CD4-positive, alpha-beta memory T cell (primary cell): ENCODE measurements at regions of chr6 and their contacts with region 1.

Region 1: DNA sequence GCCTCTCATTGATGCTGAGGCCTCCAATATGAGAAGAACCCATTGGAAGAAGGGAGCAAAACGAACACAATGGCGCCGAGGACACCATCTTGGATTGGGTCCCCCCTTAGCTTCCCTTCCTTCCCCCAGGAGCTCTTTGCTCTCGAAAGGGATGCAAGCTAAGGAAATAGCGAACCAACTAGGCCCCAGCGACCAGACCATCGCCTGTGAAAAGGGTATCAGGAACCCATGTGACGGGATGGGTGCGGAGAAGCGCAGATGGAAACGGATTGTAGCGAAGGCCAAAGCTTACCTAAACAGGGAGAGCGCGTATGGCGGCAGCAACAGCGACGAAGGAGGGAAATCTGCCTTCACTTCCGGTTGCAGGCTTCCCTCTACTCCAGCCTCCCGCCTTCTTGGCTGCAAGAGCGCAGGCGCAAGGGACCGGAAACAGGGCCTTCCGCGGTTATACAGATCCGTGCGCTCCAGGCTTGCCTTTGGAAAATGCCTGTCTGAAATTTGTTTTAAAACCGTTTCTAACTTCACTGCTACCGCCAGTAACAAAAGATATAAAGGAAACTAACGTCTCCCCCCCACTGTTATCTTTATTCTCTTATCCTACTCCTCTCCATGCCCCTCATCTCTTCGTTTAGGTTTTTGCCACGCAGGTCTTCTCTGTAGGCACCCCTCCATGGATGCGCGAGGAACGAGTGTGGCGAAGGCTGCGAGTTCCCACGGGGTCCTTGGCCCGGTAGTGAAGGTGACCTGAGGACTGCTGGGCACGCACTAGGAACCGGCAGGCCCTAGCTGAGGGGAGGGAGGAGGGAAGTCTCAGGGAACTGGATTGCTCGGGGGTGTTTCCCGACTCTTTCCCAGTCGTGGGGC is at the start of gene DDX39B:
- DNase-seq: peak; percentile 95 to 97 (median 96)
- H3K4me3 ChIP-seq: peak within 1 kb of the TSS; percentile 96 to 97
- H3K4me3 Mint-ChIP-seq: peak within 1 kb of the TSS; percentile 96 to 99 (median 98)
- H3K27ac ChIP-seq: peak within 1 kb of the TSS; percentile 94
- H3K27ac Mint-ChIP-seq: peak within 1 kb of the TSS; percentile 94 to 100 (median 99)
- H3K4me1 ChIP-seq: peaks cover 48% of the 10 kb centered on the region
- H3K4me1 Mint-ChIP-seq: peaks cover 38 to 63% (median 51%) of the 10 kb centered on the region in 4 donors
- H3K27me3 ChIP-seq: no peaks in the 10 kb centered on the region
- H3K27me3 Mint-ChIP-seq: no peaks in the 10 kb centered on the region
- total RNA-seq, gene DDX39B: 729 to 737 TPM

Region 2: DNA sequence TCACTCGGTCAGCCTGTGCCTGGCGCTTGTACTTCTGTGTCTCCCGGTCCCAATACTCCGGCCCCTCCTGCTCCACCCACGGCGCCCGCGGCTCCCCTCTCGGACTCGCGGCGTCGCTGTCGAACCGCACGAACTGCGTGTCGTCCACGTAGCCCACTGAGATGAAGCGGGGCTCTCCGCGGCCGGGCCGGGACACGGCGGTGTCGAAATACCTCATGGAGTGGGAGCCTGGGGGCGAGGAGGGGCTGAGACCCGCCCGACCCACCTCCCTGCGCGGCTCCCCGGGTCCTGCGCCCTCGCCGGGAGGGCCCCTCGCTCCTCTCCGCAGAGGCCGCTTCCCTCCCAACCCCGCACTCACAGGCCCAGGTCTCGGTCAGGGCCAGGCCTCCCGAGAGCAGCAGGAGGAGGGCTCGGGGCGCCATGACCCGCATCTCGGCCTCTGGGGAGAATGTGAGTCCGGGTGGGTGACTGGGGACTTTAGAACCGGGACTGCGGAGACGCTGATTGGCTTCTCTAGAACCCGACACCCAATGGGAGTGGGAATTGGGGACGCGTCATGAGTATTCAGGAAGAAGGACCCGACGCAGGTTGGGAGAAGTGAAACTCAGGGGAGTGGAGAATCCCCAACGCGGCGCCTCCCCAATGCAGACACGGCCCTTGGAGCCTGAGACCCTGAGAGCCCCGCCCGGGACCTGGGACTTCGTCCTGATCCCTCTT is 270.1 kb before region 1 on chr6 and contains the start of gene HLA-C:
- CTCF ChIA-PET with region 1: no interaction called
- POLR2A ChIA-PET with region 1: interaction called, 3 read pairs
- intact Hi-C with region 1: loop called (anchors 5 kb)
- DNase-seq: peak; percentile 92 to 98 (median 93)
- H3K4me3 ChIP-seq: peak within 1 kb of the TSS; percentile 88 to 94
- H3K4me3 Mint-ChIP-seq: peak within 1 kb of the TSS; percentile 95 to 100 (median 98)
- H3K27ac ChIP-seq: peak within 1 kb of the TSS; percentile 100
- H3K27ac Mint-ChIP-seq: peak within 1 kb of the TSS; percentile 99 to 100 (median 100)
- H3K4me1 ChIP-seq: peaks cover 51% of the 10 kb centered on the region
- H3K4me1 Mint-ChIP-seq: peaks cover 45 to 77% (median 54%) of the 10 kb centered on the region in 4 donors
- H3K27me3 ChIP-seq: no peaks in the 10 kb centered on the region
- H3K27me3 Mint-ChIP-seq: peaks cover 0 to 2% of the 10 kb centered on the region in 2 donors
- total RNA-seq, gene HLA-C: 1,481 to 1,487 TPM

Region 3: DNA sequence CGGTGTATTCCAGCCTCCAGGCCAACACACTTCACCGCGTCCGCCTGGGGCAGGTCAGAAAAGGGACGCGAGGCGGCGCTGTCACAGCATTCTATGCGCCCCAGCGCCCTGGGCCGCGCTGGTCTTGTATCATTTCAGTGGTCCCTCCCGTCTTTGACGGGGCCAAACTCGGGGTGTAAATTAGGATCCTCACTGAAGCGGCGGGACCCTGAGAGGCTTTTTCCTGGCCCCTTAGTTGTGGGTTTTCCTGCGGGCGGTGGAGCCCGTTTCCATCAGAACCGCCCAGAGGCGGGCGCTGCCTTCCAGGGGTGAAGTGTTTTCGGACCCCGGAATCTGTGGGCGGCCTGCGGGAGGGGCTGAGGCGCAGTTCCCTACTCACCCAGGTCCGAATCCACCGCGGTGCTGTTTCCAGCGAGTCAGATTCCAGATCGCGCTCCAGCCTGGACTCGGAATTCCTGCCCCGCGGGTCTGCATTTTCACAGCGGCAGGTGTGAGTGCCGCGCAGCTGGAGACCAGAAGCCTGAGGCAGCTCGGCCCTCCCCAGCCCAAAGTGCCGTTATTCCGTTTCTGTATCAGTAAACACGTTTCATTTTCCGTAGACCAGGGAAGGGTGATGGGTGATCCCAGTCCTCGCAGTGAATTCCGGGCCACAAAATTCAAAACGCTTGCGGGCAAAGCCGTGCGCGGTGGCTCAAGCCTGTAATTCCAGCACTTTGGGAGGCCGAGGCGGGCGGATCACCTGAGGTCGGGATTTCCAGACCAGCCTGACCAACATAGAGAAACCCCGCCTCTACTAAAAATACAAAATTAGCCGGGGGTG is 47.8 kb before region 1 on chr6:
- CTCF ChIA-PET with region 1: interaction called, 49 read pairs
- POLR2A ChIA-PET with region 1: interaction called, 152 read pairs
- intact Hi-C with region 1: loop called (anchors 1 kb)
- DNase-seq: peak; percentile 56 to 76 (median 73)
- H3K4me3 ChIP-seq: peak overlapping the region; percentile 71 to 91
- H3K4me3 Mint-ChIP-seq: peak overlapping the region; percentile 85 to 98 (median 91)
- H3K27ac ChIP-seq: peak overlapping the region; percentile 77
- H3K27ac Mint-ChIP-seq: peak overlapping the region; percentile 87 to 96 (median 95)
- H3K4me1 ChIP-seq: peaks cover 63% of the 10 kb centered on the region
- H3K4me1 Mint-ChIP-seq: peaks cover 35 to 69% (median 50%) of the 10 kb centered on the region in 4 donors
- H3K27me3 ChIP-seq: no peaks in the 10 kb centered on the region
- H3K27me3 Mint-ChIP-seq: no peaks in the 10 kb centered on the region

Region 4: DNA sequence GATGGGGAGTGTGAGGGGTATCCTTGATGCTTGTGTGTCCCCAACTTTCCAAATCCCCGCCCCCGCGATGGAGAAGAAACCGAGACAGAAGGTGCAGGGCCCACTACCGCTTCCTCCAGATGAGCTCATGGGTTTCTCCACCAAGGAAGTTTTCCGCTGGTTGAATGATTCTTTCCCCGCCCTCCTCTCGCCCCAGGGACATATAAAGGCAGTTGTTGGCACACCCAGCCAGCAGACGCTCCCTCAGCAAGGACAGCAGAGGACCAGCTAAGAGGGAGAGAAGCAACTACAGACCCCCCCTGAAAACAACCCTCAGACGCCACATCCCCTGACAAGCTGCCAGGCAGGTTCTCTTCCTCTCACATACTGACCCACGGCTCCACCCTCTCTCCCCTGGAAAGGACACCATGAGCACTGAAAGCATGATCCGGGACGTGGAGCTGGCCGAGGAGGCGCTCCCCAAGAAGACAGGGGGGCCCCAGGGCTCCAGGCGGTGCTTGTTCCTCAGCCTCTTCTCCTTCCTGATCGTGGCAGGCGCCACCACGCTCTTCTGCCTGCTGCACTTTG is 33.5 kb after region 1 on chr6 and contains the start of gene TNF:
- CTCF ChIA-PET with region 1: interaction called, 595 read pairs
- POLR2A ChIA-PET with region 1: interaction called, 3,597 read pairs
- intact Hi-C with region 1: loop called (anchors 1 kb)
- DNase-seq: peak; percentile 71 to 92 (median 74)
- H3K4me3 ChIP-seq: peak within 1 kb of the TSS; percentile 87 to 99
- H3K4me3 Mint-ChIP-seq: peak within 1 kb of the TSS; percentile 88 to 100 (median 98)
- H3K27ac ChIP-seq: peak within 1 kb of the TSS; percentile 83
- H3K27ac Mint-ChIP-seq: peak within 1 kb of the TSS; percentile 96 to 100 (median 99)
- H3K4me1 ChIP-seq: peaks cover 82% of the 10 kb centered on the region
- H3K4me1 Mint-ChIP-seq: peaks cover 58 to 97% (median 73%) of the 10 kb centered on the region in 4 donors
- H3K27me3 ChIP-seq: no peaks in the 10 kb centered on the region
- H3K27me3 Mint-ChIP-seq: no peaks in the 10 kb centered on the region
- total RNA-seq, gene TNF: 25.0 to 28.2 TPM

Region 5: DNA sequence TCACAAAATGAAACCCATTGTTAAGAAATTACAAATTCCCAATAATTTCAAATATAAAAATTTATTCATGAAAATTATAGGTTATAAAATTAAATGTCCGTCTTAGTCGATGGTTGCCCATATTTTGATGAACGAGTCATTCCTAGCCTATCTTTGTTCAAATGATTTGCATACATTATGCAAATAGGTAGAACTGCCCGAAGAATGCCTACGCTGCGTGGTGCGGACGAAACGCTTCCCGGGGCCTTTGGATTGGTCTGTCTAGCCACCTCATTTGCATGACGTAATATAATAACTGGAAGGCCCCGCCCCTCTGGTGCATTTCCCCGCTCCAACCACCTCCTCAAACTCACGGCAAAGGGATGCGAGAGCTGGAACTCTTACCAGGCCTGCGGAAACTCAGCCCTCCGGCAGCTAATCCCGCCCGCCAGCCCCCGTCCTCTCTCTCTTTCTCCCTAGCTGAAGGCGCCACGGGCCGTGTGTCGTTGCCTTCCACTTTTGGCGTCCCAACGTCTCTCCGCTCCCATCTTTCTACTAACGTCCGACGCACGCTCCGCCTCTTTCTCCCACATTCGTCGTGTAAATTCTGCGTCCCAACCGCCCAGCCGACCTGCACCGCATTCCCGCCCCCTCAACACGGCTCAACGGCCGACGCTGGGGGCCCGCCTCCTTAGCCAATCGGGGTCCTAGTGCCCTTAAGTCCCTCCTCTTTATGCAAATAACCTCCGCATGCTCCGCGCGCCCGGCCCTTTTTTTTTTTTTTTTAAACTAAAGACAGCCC is 78.1 kb after region 1 on chr6:
- CTCF ChIA-PET with region 1: interaction called, 3 read pairs
- POLR2A ChIA-PET with region 1: interaction called, 20 read pairs
- intact Hi-C with region 1: loop called (anchors 1 kb)
- DNase-seq: peak; percentile 96 to 98 (median 98)
- H3K4me3 ChIP-seq: peak overlapping the region in 1 of 2 donors; percentile 93
- H3K4me3 Mint-ChIP-seq: peak overlapping the region; percentile 89 to 98 (median 93)
- H3K27ac ChIP-seq: peak overlapping the region; percentile 99
- H3K27ac Mint-ChIP-seq: peak overlapping the region; percentile 91 to 99 (median 98)
- H3K4me1 ChIP-seq: peaks cover 34% of the 10 kb centered on the region
- H3K4me1 Mint-ChIP-seq: peaks cover 21 to 49% (median 39%) of the 10 kb centered on the region in 4 donors
- H3K27me3 ChIP-seq: no peaks in the 10 kb centered on the region
- H3K27me3 Mint-ChIP-seq: no peaks in the 10 kb centered on the region

Region 6: DNA sequence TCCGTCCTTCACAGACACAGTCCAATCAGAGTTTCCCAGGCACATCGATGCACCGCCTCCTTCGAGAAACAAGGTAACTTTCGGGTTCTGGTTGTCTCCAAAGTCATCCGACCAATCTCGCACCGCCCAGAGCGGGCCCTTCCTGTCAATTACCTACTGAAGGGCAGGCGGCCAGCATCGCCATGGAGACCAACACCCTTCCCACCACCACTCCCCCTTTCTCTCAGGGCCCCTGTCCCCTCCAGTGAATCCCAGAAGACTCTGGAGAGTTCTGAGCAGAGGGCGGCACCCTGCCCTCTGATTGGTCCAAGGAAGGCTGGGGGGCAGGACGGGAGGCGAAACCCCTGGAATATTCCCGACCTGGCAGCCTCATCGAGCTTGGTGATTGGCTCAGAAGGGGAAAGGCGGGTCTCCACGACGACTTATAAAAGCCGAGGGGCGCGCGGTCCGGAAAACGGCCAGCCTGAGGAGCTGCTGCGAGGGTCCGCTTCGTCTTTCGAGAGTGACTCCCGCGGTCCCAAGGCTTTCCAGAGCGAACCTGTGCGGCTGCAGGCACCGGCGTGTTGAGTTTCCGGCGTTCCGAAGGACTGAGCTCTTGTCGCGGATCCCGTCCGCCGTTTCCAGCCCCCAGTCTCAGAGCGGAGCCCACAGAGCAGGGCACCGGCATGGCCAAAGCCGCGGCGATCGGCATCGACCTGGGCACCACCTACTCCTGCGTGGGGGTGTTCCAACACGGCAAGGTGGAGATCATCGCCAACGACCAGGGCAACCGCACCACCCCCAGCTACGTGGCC is 285.6 kb after region 1 on chr6 and contains the start of gene HSPA1B:
- CTCF ChIA-PET with region 1: interaction called, 5 read pairs
- POLR2A ChIA-PET with region 1: interaction called, 10 read pairs
- intact Hi-C with region 1: loop called (anchors 1 kb)
- DNase-seq: peak; percentile 86 to 89 (median 87)
- H3K4me3 ChIP-seq: peak within 1 kb of the TSS; percentile 67 to 90
- H3K4me3 Mint-ChIP-seq: peak within 1 kb of the TSS; percentile 88 to 98 (median 95)
- H3K27ac ChIP-seq: peak within 1 kb of the TSS; percentile 83
- H3K27ac Mint-ChIP-seq: peak within 1 kb of the TSS; percentile 93 to 99 (median 96)
- H3K4me1 ChIP-seq: peaks cover 45% of the 10 kb centered on the region
- H3K4me1 Mint-ChIP-seq: peaks cover 18 to 55% (median 37%) of the 10 kb centered on the region in 4 donors
- H3K27me3 ChIP-seq: no peaks in the 10 kb centered on the region
- H3K27me3 Mint-ChIP-seq: no peaks in the 10 kb centered on the region
- total RNA-seq, gene HSPA1B: 58.0 to 60.8 TPM